Activated B cell treated with CpG ODN at 0.5 μM for 24 hours (primary cell): ENCODE measurements at regions of chr10 and their contacts with region 1.

Region 1: GRCh38 chr10:103584216-103585010 is 90.9 kb downstream of the NEURL1 start:
- DNase-seq: peak; percentile 47
- ATAC-seq: peak; percentile 78
- H3K4me3 Mint-ChIP-seq: peak overlapping the region; percentile 82
- H3K27ac Mint-ChIP-seq: peak overlapping the region; percentile 79
- H3K4me1 Mint-ChIP-seq: peaks cover 12% of the 10 kb centered on the region
- H3K27me3 Mint-ChIP-seq: no peaks in the 10 kb centered on the region
- CTCF ChIP-seq: no peak

Region 2: DNA sequence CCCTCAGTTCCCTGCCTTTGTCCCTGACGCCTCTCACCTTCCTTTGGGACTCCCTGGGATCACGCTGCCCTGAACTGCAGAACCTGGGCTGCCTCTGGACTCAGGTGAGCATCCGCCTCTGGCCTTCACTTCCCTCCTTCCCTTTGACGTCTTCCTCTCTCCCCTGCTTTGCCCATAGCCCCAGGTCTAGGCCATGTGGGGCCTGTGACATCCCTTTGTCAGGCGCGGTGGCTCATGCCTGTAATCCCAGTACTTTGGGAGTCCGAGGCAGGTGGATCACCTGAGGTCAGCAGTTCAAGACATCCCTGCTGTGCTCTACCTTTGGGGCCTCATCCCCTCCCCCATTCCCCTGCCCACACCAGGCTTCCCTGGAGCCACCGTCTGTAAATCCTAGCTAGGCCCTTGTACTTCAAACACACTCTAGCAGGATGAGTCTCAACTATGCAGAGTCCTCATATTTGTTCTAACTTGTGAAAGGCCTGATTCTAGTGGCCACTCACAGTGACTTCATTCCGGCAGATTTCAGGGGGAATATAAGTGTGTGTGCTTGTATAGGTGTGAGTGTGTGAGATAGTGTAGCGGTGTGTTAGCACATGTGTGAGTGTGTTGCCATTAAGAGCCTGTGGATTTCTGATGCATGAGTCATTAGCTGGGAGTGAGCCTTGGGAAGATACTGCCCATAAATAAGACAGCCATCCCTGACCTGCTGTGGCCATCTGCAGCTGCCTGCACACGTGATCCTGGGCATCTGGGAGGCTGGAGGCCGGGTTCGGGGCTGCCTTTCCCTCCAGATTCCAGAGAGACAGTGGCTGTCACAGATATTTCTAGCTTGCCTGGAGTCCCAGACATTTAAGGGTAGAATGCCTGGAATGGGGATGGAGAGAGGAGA is 92.7 kb before region 1 on chr10:
- CTCF ChIA-PET with region 1: no interaction called
- POLR2A ChIA-PET with region 1: no interaction called
- intact Hi-C with region 1: loop called (anchors 5 kb)
- DNase-seq: no peak
- ATAC-seq: no peak
- H3K4me3 Mint-ChIP-seq: no peak overlapping the region
- H3K27ac Mint-ChIP-seq: no peak overlapping the region
- H3K4me1 Mint-ChIP-seq: peaks cover 31% of the 10 kb centered on the region
- H3K27me3 Mint-ChIP-seq: peaks cover 24% of the 10 kb centered on the region
- CTCF ChIP-seq: no peak